Mammary epithelial cell (primary cell): ENCODE measurements at regions of chrX and their contacts with region 1.

Region 1: GRCh38 chrX:135543172-135543571 is 22.7 kb downstream of the INTS6L start:
- DNase-seq: no peak
- H3K4me3 ChIP-seq: no peak overlapping the region
- H3K27ac ChIP-seq: no peak overlapping the region
- H3K4me1 ChIP-seq: no peaks in the 10 kb centered on the region
- H3K27me3 ChIP-seq: no peaks in the 10 kb centered on the region
- CTCF ChIP-seq: no peak

Region 2: GRCh38 chrX:134963041-134963440 is 580.1 kb before region 1 on chrX:
- CTCF ChIA-PET with region 1: no interaction called
- dilution Hi-C with region 1: no loop called
- in situ Hi-C with region 1: no loop called
- intact Hi-C with region 1: no loop called
- DNase-seq: no peak
- H3K4me3 ChIP-seq: no peak overlapping the region
- H3K27ac ChIP-seq: no peak overlapping the region
- H3K4me1 ChIP-seq: no peaks in the 10 kb centered on the region
- H3K27me3 ChIP-seq: no peaks in the 10 kb centered on the region
- CTCF ChIP-seq: no peak

Region 3: DNA sequence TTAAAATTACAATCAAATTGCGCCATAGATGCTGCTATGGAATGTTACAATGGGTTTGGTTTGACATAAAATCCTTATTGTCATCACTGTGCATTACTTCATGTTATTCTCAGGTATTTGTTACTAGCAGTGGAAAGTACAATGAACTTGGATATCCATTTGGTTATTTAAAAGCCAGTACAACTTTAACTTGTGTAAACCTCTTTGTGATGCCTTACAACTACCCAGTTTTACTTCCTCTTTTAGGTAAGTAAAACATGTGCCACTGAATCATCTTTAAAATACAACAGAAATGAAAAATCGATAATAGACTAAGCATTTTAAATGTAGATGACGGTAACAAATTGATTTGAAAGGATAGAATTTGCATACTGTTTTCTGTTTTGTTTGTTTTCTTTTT is 12.9 kb after region 1 on chrX:
- CTCF ChIA-PET with region 1: interaction called, 15 read pairs
- dilution Hi-C with region 1: no loop called
- in situ Hi-C with region 1: no loop called
- intact Hi-C with region 1: no loop called
- DNase-seq: no peak
- H3K4me3 ChIP-seq: no peak overlapping the region
- H3K27ac ChIP-seq: no peak overlapping the region
- H3K4me1 ChIP-seq: no peaks in the 10 kb centered on the region
- H3K27me3 ChIP-seq: no peaks in the 10 kb centered on the region
- CTCF ChIP-seq: no peak